ENCODE measurements at regions of chr18 and their contacts with region 1.

Region 1: DNA sequence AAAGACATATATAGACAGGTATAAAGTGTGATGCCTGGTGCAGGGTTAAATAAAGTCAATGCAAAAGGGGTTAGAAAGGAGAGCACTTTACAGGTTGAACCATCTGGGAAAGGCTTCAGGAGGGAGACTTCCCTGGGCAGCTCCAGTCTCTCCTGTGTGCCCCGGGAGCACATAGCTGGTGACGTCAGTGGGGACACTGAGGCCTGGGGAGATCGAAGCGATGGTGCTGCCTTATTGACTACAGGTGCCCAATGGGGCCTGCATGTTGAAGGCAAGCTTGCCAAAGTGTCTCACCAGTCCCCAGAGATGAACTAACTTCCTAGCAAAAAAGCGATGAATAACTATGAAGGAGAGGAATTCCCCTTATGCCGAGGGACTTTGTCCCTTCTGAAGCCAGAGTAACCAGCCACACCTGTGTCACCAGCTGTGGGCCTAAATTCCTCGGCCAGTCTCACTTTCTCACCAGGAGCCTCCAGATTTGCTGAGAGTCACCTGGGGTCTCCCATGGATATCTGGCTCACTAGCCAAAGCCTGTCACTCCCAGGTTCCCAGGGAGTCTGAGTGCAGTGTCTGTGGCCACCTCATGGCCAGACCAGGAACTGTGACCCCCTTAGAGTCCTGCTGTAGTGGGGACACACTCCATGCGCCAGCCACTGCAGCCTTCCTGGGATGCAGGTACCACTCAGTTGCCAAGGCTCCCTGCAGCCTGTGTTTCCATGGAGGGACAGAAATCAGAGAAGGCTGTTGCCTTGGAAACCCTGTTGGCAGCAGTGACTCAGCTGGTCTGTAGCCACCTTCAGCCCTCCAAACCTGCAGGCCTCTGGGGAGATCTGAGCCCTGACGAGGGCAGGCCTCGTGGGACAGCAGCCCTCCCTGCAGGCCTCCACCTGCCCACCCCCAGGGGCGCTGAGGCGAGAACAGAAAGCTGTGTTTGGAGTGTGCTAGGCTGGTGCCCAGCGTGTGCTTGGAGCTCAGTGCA is 128.7 kb downstream of the CTIF start:
- DNase-seq: peak; percentile 49 to 52
- H3K4me3 ChIP-seq: no peak overlapping the region
- H3K4me3 Mint-ChIP-seq: peak overlapping the region; percentile 30
- H3K27ac Mint-ChIP-seq: peak overlapping the region; percentile 13
- H3K4me1 ChIP-seq: peaks cover 18% of the 10 kb centered on the region; the same call in 1 of the 2 replicates
- H3K4me1 Mint-ChIP-seq: peaks cover 14% of the 10 kb centered on the region
- H3K27me3 ChIP-seq: no peaks in the 10 kb centered on the region
- H3K27me3 Mint-ChIP-seq: no peaks in the 10 kb centered on the region
- CTCF ChIP-seq: peak in 1 of 2 experiments; percentile 54

Region 2: GRCh38 chr18:48538531-48539405 is 128.8 kb before region 1 on chr18 and contains the start of gene CTIF:
- CTCF ChIA-PET with region 1: no interaction called
- POLR2A ChIA-PET with region 1: no interaction called
- intact Hi-C with region 1: loop called (anchors 2 kb)
- DNase-seq: peak; percentile 90 to 94
- H3K4me3 ChIP-seq: peak within 1 kb of the TSS; percentile 65
- H3K4me3 Mint-ChIP-seq: peak within 1 kb of the TSS; percentile 77
- H3K27ac Mint-ChIP-seq: peak within 1 kb of the TSS; percentile 48
- H3K4me1 ChIP-seq: peaks cover 22% of the 10 kb centered on the region
- H3K4me1 Mint-ChIP-seq: no peaks in the 10 kb centered on the region
- H3K27me3 ChIP-seq: no peaks in the 10 kb centered on the region
- H3K27me3 Mint-ChIP-seq: no peaks in the 10 kb centered on the region
- CTCF ChIP-seq: no peak
- total RNA-seq, gene CTIF: 19.9 and 21.4 TPM in 2 replicates

Region 3: GRCh38 chr18:48605408-48605845 is 62.1 kb before region 1 on chr18:
- CTCF ChIA-PET with region 1: no interaction called
- POLR2A ChIA-PET with region 1: no interaction called
- intact Hi-C with region 1: loop called (anchors 5 kb)
- DNase-seq: peak; percentile 28 to 37
- H3K4me3 ChIP-seq: no peak overlapping the region
- H3K4me3 Mint-ChIP-seq: no peak overlapping the region
- H3K27ac Mint-ChIP-seq: no peak overlapping the region
- H3K4me1 ChIP-seq: no peaks in the 10 kb centered on the region
- H3K4me1 Mint-ChIP-seq: no peaks in the 10 kb centered on the region
- H3K27me3 ChIP-seq: no peaks in the 10 kb centered on the region
- H3K27me3 Mint-ChIP-seq: no peaks in the 10 kb centered on the region
- CTCF ChIP-seq: peak in 1 of 2 experiments; percentile 48

Measured in Caco-2 (cell line).